ENCODE measurements at regions of chr5 and their contacts with region 1.

Region 1: GRCh38 chr5:126536874-126537273 is 58.1 kb downstream of the ALDH7A1 start:
- DNase-seq: no peak
- ATAC-seq: no peak
- H3K4me3 ChIP-seq: no peak overlapping the region
- H3K27ac ChIP-seq: no peak overlapping the region
- H3K4me1 ChIP-seq: peaks cover 6 to 9% of the 10 kb centered on the region in 2 experiments; a peak in 2 of 5 replicates
- H3K27me3 ChIP-seq: peaks cover 0 to 2% of the 10 kb centered on the region in 2 experiments; a peak in 2 of 5 replicates
- CTCF ChIP-seq: no peak
- EP300 ChIP-seq: no peak
- POLR2A ChIP-seq: no peak
- RAD21 ChIP-seq: no peak

Region 2: DNA sequence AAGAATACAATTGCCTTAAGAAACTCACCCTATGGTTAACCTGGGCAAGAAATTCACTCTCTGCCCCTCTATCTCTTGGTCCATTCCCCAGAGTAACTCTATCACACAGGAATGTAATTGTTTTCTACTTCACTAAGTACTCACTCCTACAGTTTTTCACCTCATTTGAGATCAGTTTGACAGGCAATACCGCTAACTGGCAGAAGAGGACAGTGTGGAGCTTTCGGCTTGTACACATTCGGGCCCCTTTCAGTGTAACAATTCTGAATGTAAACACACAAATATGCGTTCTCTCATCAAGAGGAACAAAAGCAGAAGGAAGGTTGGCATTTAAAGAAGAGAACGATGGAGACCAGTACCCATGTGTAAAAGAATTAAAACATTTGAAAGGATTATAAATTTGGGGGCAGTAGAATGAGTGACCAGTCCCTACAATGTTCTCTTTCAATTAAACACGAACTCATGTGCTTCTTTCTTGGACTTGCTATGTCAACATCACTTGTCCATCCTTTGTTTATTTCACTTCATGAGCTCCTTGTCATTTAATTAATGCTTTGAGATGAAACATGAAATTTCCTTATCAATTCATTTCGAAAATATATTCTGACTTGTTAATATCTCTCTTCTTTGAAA is 302.2 kb before region 1 on chr5:
- CTCF ChIA-PET with region 1: no interaction called
- POLR2A ChIA-PET with region 1: no interaction called
- in situ Hi-C with region 1: no loop called
- intact Hi-C with region 1: loop called (anchors 5 kb)
- DNase-seq: peak in 3 of 4 experiments; percentile 8 to 20 (median 9)
- ATAC-seq: peak; percentile 74
- H3K4me3 ChIP-seq: no peak overlapping the region
- H3K27ac ChIP-seq: no peak overlapping the region
- H3K4me1 ChIP-seq: no peaks in the 10 kb centered on the region
- H3K27me3 ChIP-seq: no peaks in the 10 kb centered on the region
- CTCF ChIP-seq: peak; percentile 43 to 55 (median 44)
- EP300 ChIP-seq: no peak
- POLR2A ChIP-seq: no peak
- RAD21 ChIP-seq: peak in 1 of 2 experiments; percentile 39; a peak in 1 of 4 replicates

Region 3: GRCh38 chr5:126354012-126354857 is 182.6 kb before region 1 on chr5:
- CTCF ChIA-PET with region 1: interaction called, 36 read pairs
- POLR2A ChIA-PET with region 1: interaction called, 3 read pairs
- in situ Hi-C with region 1: loop called (anchors 5 kb)
- intact Hi-C with region 1: loop called (anchors 1 kb)
- DNase-seq: peak in 2 of 4 experiments; percentile 52 to 58
- ATAC-seq: peak; percentile 86
- H3K4me3 ChIP-seq: no peak overlapping the region
- H3K27ac ChIP-seq: peak overlapping the region; percentile 55
- H3K4me1 ChIP-seq: peaks cover 0 to 10% of the 10 kb centered on the region in 2 experiments; a peak in 2 of 5 replicates
- H3K27me3 ChIP-seq: no peaks in the 10 kb centered on the region
- CTCF ChIP-seq: peak; percentile 50 to 81 (median 54); a peak in 4 of 6 replicates
- EP300 ChIP-seq: no peak
- POLR2A ChIP-seq: no peak
- RAD21 ChIP-seq: peak; percentile 94 to 97

Region 4: DNA sequence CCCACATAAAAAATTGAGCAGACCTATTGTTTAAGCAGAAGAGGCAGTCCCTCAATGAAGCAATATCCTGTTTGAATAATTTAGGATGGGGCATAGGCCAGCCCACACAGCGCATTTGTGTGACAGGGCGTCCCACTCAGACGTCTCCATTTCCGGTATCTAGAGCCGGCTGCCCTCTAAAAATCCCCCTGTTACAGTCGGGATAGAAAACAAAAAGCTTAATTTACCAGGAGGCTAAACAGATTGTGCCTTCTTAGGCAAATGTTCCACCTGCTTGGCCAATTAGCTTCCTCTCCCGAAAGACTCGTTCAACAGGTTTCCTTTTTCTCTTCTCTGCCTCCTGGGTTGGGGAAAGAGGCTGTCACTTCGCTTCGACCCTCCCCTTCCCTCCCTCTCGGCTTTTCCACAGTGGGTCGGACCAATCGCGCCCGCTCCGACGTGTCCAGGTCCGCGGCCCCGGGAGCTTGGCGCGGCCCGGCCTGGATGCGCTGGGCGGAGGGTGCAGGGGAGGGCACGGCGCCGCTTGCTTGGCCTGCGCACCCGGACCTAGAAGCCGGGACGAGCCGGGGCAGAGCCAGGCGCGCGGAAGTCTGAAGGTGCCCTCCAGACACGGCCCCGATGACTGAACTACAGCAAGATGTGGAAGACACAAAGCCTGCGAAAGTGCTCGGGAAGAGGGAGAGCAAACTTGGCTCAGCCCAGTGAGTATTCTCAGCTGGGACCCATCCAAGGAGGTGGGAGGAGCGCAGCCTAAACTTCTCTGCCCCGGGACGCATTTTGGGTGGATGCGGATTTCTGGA is 113.7 kb before region 1 on chr5 and contains the start of gene GRAMD2B:
- CTCF ChIA-PET with region 1: no interaction called
- POLR2A ChIA-PET with region 1: no interaction called
- in situ Hi-C with region 1: no loop called
- intact Hi-C with region 1: loop called (anchors 5 kb)
- DNase-seq: peak; percentile 20 to 43 (median 30)
- ATAC-seq: peak; percentile 86
- H3K4me3 ChIP-seq: peak within 1 kb of the TSS; percentile 41
- H3K27ac ChIP-seq: peak within 1 kb of the TSS; percentile 50
- H3K4me1 ChIP-seq: peaks cover 0 to 6% of the 10 kb centered on the region in 2 experiments; a peak in 2 of 5 replicates
- H3K27me3 ChIP-seq: peaks cover 0 to 4% of the 10 kb centered on the region in 2 experiments; a peak in 2 of 5 replicates
- CTCF ChIP-seq: no peak
- EP300 ChIP-seq: no peak
- POLR2A ChIP-seq: peak; percentile 41; the same call in 1 of the 2 replicates
- RAD21 ChIP-seq: no peak
- polyA plus RNA-seq, gene GRAMD2B: 0.32 to 0.90 TPM

Region 5: DNA sequence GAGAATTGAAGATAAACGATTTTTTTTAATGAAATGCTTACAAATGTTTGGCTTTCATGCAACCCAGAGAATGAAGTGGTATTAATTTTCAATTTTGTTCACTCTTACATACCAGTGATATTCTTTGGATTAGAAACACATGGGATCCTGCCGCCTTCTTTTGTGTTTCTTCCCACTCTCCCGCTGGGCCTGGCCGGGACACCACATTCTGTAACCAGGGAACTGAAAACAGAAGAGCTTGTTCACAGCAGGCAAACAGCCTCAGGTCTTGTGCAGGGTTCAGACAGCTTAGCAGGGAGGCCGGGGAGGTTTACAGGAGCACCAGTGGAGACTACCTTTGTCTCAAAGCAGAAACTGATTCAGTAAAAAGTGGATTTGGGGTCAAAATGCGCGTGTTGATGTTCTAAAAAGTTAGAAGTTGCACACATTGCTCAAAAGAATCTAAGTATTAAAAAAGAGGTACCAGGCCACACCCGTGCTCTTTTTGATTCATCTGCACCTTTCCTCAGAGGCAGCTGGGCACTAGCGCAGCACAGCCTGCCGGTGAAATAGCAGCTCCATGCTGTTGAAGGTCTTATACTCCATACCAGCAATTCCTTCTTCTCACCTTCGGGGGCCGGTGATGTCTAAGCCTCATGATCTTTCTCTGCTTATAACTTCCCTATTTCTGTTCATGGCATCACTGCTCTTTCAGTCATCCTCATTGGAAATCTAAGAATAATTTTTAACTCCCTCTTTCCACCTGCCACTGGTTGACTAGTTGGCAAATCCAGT is 46.5 kb before region 1 on chr5:
- CTCF ChIA-PET with region 1: no interaction called
- POLR2A ChIA-PET with region 1: no interaction called
- in situ Hi-C with region 1: loop called (anchors 5 kb)
- intact Hi-C with region 1: loop called (anchors 2 kb)
- DNase-seq: no peak
- ATAC-seq: peak; percentile 82
- H3K4me3 ChIP-seq: no peak overlapping the region
- H3K27ac ChIP-seq: no peak overlapping the region
- H3K4me1 ChIP-seq: peaks cover 0 to 3% of the 10 kb centered on the region in 2 experiments; a peak in 1 of 5 replicates
- H3K27me3 ChIP-seq: no peaks in the 10 kb centered on the region
- CTCF ChIP-seq: peak; percentile 16 to 51 (median 41); a peak in 3 of 6 replicates
- EP300 ChIP-seq: no peak
- POLR2A ChIP-seq: no peak
- RAD21 ChIP-seq: peak in 1 of 2 experiments; percentile 42; a peak in 2 of 4 replicates

Region 6: GRCh38 chr5:126499853-126500342 is 37.0 kb before region 1 on chr5:
- CTCF ChIA-PET with region 1: interaction called, 3 read pairs
- POLR2A ChIA-PET with region 1: interaction called, 3 read pairs
- in situ Hi-C with region 1: no loop called
- intact Hi-C with region 1: loop called (anchors 2 kb)
- DNase-seq: peak; percentile 35 to 66 (median 40)
- ATAC-seq: peak; percentile 77
- H3K4me3 ChIP-seq: no peak overlapping the region
- H3K27ac ChIP-seq: no peak overlapping the region
- H3K4me1 ChIP-seq: peaks cover 0 to 7% of the 10 kb centered on the region in 2 experiments; a peak in 4 of 5 replicates
- H3K27me3 ChIP-seq: no peaks in the 10 kb centered on the region
- CTCF ChIP-seq: peak; percentile 59 to 74 (median 70)
- EP300 ChIP-seq: no peak
- POLR2A ChIP-seq: no peak
- RAD21 ChIP-seq: peak; percentile 28 to 43; a peak in 3 of 4 replicates

Region 7: GRCh38 chr5:126514131-126514557 is 22.7 kb before region 1 on chr5:
- CTCF ChIA-PET with region 1: no interaction called
- POLR2A ChIA-PET with region 1: no interaction called
- in situ Hi-C with region 1: no loop called
- intact Hi-C with region 1: loop called (anchors 2 kb)
- DNase-seq: peak in 3 of 4 experiments; percentile 30 to 95 (median 75)
- ATAC-seq: peak; percentile 78
- H3K4me3 ChIP-seq: peak overlapping the region; percentile 19; the same call in 1 of the 2 replicates
- H3K27ac ChIP-seq: peak overlapping the region; percentile 98
- H3K4me1 ChIP-seq: peaks cover 3 to 47% of the 10 kb centered on the region in 2 experiments
- H3K27me3 ChIP-seq: no peaks in the 10 kb centered on the region
- CTCF ChIP-seq: no peak
- EP300 ChIP-seq: peak; percentile 78
- POLR2A ChIP-seq: no peak
- RAD21 ChIP-seq: no peak

Region 8: DNA sequence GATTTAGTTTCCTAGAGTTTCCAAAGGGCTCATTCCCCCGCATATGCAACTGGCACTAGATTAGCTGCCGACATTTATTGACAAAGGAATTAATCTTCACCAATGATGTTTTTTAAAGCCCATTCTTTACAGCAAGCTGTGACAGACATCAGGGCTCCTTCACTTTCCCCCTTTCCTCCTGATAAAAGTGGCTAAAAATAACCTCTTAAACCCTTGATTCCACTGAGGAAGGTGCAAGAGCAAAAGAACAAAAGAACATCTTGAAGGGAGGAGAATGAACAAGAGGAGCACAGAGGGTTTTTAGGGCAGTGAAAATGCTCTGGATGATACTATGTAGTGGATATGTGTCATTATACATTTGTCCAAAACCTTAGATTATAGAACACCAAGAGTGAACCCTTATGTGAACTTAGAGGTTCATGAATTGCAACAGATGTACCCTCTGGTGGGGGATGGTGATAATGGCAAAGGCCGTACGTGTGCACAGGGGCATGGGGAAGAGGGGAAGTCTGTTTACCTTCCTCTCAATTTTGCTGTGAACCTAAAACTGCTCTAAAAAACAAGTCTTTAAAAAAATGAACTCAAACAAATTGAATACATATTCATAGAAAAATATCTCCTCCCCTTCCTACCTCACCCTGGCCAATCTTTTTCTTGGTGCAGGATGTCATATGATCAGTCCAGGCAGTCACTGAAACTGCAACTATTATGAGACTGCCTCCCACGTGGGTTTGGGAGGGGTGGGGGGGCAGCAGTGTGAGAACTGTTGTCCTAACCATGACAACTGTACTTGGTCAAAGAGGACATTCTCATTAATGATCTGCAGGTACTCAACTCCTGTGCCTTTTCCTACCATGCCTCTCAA is 410.5 kb after region 1 on chr5:
- CTCF ChIA-PET with region 1: no interaction called
- POLR2A ChIA-PET with region 1: no interaction called
- in situ Hi-C with region 1: no loop called
- intact Hi-C with region 1: no loop called
- DNase-seq: peak in 2 of 4 experiments; percentile 60 to 79
- ATAC-seq: peak; percentile 86
- H3K4me3 ChIP-seq: no peak overlapping the region
- H3K27ac ChIP-seq: peak overlapping the region; percentile 58; the same call in 2 of the 3 replicates
- H3K4me1 ChIP-seq: peaks cover 0 to 30% of the 10 kb centered on the region in 2 experiments
- H3K27me3 ChIP-seq: no peaks in the 10 kb centered on the region
- CTCF ChIP-seq: no peak
- EP300 ChIP-seq: no peak
- POLR2A ChIP-seq: no peak
- RAD21 ChIP-seq: peak in 1 of 2 experiments; percentile 26; a peak in 1 of 4 replicates